GM12878 (cell line): ENCODE measurements at regions of chr18 and their contacts with region 1.

Region 1: DNA sequence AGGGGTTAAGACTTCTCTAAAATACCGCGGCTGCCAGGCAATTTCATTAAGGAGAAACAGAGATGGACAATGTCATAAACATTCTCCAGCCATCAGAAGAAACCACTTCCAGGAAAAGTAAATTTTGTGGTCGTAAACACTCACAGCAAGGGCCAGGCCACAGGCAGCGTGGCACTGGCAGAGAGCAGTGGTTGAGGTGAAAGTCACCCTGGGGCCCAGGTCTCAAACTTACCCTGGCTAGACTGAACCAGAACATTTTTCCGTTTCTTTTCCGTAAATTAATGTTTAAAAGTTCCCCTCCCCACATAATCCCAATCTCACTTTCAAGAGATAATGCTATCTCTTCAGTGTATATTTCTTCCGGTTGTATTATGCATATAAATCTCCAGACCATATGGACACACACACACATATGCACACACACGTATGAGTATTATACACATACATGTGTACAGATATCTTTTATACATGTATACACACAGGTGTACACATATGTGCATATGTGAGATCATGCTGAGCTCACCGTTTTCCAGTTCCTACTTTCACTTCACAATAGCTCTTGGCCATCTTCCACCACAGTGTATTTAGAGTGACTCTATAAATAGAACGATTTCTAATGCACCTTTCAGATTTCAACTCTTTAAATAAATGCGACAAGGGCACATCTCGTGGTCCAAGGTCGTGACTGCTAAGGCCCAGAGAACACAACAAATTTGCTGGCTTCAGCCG is 90.1 kb downstream of the MALT1 start:
- DNase-seq: peak; percentile 84
- ATAC-seq: peak; percentile 83
- H3K4me3 ChIP-seq: no peak overlapping the region
- H3K27ac ChIP-seq: peak overlapping the region; percentile 78
- H3K4me1 ChIP-seq: peaks cover 24% of the 10 kb centered on the region
- H3K27me3 ChIP-seq: no peaks in the 10 kb centered on the region; a peak in 2 of 4 replicates
- CTCF ChIP-seq: no peak
- EP300 ChIP-seq: peak; percentile 35 to 62; a peak in 3 of 4 replicates
- POLR2A ChIP-seq: no peak
- RAD21 ChIP-seq: peak; percentile 27; the same call in 1 of the 2 replicates

Region 2: GRCh38 chr18:58394602-58395425 is 366.6 kb before region 1 on chr18:
- CTCF ChIA-PET with region 1: interaction called, 32 read pairs
- POLR2A ChIA-PET with region 1: no interaction called
- RAD21 ChIA-PET with region 1: interaction called, 13 read pairs
- SMC1A ChIA-PET with region 1: interaction called, 11 read pairs
- in situ Hi-C with region 1: no loop called
- intact Hi-C with region 1: loop called (anchors 1 kb)
- DNase-seq: no peak
- ATAC-seq: no peak
- H3K4me3 ChIP-seq: no peak overlapping the region
- H3K27ac ChIP-seq: no peak overlapping the region
- H3K4me1 ChIP-seq: peaks cover 8% of the 10 kb centered on the region; the same call in 1 of the 2 replicates
- H3K27me3 ChIP-seq: no peaks in the 10 kb centered on the region
- CTCF ChIP-seq: no peak
- EP300 ChIP-seq: no peak
- POLR2A ChIP-seq: no peak
- RAD21 ChIP-seq: no peak

Region 3: DNA sequence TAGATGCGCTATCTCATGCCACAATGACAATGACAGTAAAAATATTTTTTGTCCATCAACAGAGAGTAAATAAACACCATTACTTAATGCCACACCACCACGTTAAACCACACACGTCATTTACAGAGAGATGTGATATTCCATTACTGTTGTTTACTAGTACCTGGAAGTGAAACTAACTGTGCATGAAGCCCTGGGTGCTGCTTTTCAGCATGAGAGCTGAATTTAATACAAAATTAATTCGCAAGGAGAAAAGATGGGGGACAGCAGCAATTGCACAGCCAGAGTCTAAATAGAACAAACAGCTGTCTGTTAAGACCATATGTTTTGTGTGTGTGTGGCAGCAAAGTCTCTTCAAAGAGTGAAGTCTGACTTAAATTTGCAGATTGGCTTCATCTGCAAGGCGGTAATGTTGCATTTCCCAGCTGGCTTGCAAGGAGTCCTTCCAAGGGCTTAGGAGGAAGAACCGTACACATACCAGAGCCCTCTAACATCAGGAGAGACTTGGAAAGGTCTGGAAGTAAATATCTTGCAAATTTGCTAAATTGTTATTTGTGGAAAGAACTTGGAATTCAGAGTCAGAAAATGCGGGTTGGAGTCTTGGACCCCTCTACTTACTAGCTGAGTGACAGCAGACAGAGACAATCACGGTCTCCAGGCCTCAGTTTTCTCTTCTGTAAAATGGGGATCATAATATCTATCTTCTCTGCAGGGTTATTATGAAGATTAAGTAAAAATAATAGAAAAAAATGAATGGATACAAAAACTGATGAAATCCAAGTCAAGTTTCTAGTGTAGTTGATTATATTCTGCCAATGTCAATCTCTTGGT is 260.1 kb before region 1 on chr18:
- CTCF ChIA-PET with region 1: interaction called, 93 read pairs
- POLR2A ChIA-PET with region 1: no interaction called
- RAD21 ChIA-PET with region 1: interaction called, 38 read pairs
- SMC1A ChIA-PET with region 1: interaction called, 57 read pairs
- in situ Hi-C with region 1: no loop called
- intact Hi-C with region 1: no loop called
- DNase-seq: no peak
- ATAC-seq: peak; percentile 80
- H3K4me3 ChIP-seq: no peak overlapping the region
- H3K27ac ChIP-seq: no peak overlapping the region
- H3K4me1 ChIP-seq: peaks cover 6% of the 10 kb centered on the region
- H3K27me3 ChIP-seq: no peaks in the 10 kb centered on the region
- CTCF ChIP-seq: no peak
- EP300 ChIP-seq: peak; percentile 35 to 68; a peak in 2 of 4 replicates
- POLR2A ChIP-seq: no peak
- RAD21 ChIP-seq: no peak

Region 4: DNA sequence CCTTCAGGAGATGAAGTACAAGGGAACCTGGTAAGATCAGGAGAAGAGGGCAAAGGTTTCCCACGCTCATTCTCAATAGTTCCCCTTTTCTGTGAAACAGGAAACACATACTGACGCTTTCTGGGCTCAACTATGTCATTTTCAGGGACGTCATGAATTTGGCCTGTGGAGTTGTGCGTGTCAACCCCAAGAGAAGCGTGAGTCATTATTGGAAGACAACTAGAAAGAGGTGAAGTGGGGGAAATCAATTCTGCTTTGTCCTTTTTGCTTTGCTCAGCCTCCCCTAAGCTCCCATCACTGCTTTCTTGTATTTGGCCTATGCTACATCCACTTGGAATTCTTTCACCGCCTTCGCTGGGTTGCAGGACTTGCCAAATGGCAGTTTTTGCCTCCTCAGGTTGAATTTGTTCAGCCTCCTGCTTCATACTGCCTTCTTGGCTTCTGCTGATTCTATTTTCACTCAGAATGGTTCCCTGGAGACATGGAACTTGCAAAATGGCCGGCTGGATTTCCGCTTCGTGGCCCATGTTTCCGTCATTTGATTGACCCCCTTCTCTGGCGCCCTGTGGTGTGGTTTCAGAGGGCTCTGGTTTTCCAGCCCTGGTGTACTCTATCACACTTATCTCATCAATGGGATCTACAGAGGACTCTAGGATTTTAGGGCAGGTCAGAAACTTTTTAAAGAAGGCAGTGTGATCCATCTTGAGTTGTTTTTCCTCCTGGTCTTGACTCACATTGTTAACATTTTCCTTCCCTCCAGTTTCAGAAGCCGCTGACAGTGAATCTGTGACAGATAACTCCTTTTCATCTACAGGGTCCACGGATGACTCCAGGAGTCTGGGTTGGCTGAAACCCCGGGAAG is 225.8 kb before region 1 on chr18:
- CTCF ChIA-PET with region 1: interaction called, 743 read pairs
- POLR2A ChIA-PET with region 1: interaction called, 25 read pairs
- RAD21 ChIA-PET with region 1: interaction called, 522 read pairs
- SMC1A ChIA-PET with region 1: interaction called, 629 read pairs
- in situ Hi-C with region 1: loop called (anchors 5 kb)
- intact Hi-C with region 1: no loop called
- DNase-seq: peak; percentile 99
- ATAC-seq: peak; percentile 42
- H3K4me3 ChIP-seq: peak overlapping the region; percentile 77
- H3K27ac ChIP-seq: peak overlapping the region; percentile 100
- H3K4me1 ChIP-seq: peaks cover 22% of the 10 kb centered on the region
- H3K27me3 ChIP-seq: no peaks in the 10 kb centered on the region
- CTCF ChIP-seq: no peak
- EP300 ChIP-seq: peak; percentile 97 to 98; a peak in 3 of 4 replicates
- POLR2A ChIP-seq: peak; percentile 66
- RAD21 ChIP-seq: no peak

Region 5: DNA sequence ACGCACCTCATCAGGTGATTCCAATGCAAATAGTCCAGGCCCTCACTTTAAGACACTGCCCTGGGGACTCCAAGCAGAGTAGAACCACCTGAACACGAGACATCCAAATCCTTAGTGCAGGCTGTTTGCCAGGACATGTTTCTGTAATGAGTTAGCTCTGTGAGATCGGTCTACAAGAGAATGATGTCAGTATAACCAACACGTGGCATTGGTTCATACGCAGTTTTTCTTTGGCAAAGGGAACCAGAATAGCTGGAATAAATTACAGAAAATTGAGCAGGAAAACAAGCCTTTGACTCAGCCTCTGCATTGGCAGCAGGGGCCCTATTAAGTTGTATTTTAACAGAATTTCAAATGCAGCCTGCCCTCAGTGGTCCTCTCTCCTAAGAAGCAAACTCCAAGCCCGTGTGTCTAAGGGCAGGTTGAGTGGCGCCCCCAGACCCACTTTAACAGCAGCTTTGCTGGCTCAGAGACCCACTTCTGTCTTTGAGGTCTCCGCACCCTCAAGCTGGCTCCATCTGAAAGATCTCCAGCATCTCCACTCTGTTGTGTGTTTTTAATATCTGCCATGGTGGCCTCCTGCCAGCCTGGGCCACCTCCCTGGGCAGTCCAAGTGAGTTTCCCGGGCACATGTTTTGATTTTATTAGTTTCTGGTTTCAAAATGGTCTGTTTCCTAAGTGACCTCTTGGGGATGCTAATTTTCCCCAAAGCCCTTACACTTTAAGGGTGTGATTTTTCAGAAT is 193.8 kb before region 1 on chr18:
- CTCF ChIA-PET with region 1: interaction called, 5 read pairs
- POLR2A ChIA-PET with region 1: interaction called, 3 read pairs
- RAD21 ChIA-PET with region 1: interaction called, 6 read pairs
- SMC1A ChIA-PET with region 1: interaction called, 17 read pairs
- in situ Hi-C with region 1: no loop called
- intact Hi-C with region 1: no loop called
- DNase-seq: no peak
- ATAC-seq: no peak
- H3K4me3 ChIP-seq: no peak overlapping the region
- H3K27ac ChIP-seq: no peak overlapping the region
- H3K4me1 ChIP-seq: peaks cover 28% of the 10 kb centered on the region
- H3K27me3 ChIP-seq: no peaks in the 10 kb centered on the region
- CTCF ChIP-seq: no peak
- EP300 ChIP-seq: no peak
- POLR2A ChIP-seq: no peak
- RAD21 ChIP-seq: no peak

Region 6: GRCh38 chr18:58676270-58676669 is 85.1 kb before region 1 on chr18:
- CTCF ChIA-PET with region 1: interaction called, 17 read pairs
- POLR2A ChIA-PET with region 1: interaction called, 4 read pairs
- RAD21 ChIA-PET with region 1: interaction called, 4 read pairs
- SMC1A ChIA-PET with region 1: interaction called, 19 read pairs
- in situ Hi-C with region 1: no loop called
- intact Hi-C with region 1: no loop called
- DNase-seq: no peak
- ATAC-seq: peak; percentile 27
- H3K4me3 ChIP-seq: peak overlapping the region; percentile 95
- H3K27ac ChIP-seq: no peak overlapping the region
- H3K4me1 ChIP-seq: peaks cover 3% of the 10 kb centered on the region; the same call in 1 of the 2 replicates
- H3K27me3 ChIP-seq: no peaks in the 10 kb centered on the region
- CTCF ChIP-seq: no peak
- EP300 ChIP-seq: no peak
- POLR2A ChIP-seq: no peak
- RAD21 ChIP-seq: no peak

Region 7: DNA sequence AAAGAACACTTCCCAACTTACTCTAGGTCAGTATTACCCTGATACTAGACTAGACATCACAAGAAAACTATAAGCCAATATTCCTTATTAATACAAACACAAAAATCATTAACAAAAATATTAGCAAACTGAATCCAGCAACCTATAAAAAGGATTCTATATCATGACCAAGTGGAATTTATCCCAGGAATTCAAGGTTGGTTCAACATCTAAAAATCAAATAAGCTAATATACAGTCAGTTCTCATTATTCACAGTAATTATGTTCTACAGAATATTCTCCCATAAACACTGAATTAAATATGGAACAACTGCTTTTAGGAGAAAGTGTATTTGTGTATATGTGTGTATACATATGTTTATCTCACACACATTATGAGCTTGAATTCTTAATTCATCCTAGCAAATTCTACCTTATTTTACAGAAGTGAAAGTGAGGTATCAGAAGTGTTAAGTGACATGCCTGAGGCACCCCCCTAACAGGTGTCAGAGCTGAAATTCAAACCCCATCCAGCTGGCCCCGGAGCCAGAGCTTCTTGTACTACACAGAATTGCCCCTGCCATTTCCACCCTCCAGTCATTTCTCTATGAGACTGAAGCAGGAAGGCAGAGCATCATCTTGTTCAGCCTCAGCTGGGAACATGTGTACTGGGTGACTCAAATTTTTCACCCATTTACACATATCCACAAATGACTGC is 12.4 kb before region 1 on chr18:
- CTCF ChIA-PET with region 1: interaction called, 40 read pairs
- POLR2A ChIA-PET with region 1: no interaction called
- RAD21 ChIA-PET with region 1: interaction called, 16 read pairs
- SMC1A ChIA-PET with region 1: interaction called, 25 read pairs
- in situ Hi-C with region 1: no loop called
- intact Hi-C with region 1: no loop called
- DNase-seq: no peak
- ATAC-seq: peak; percentile 40; the same call in 2 of the 3 replicates
- H3K4me3 ChIP-seq: no peak overlapping the region
- H3K27ac ChIP-seq: no peak overlapping the region
- H3K4me1 ChIP-seq: no peaks in the 10 kb centered on the region
- H3K27me3 ChIP-seq: no peaks in the 10 kb centered on the region
- CTCF ChIP-seq: no peak
- EP300 ChIP-seq: no peak
- POLR2A ChIP-seq: no peak
- RAD21 ChIP-seq: no peak